Activated CD4-positive, alpha-beta memory T cell treated with anti-CD3 and anti-CD28 coated beads for 36 hours (primary cell): ENCODE measurements at regions of chr6 and their contacts with region 1.

Region 1: GRCh38 chr6:158853072-158853871 is 34.1 kb upstream of the EZR start:
- DNase-seq: peak; percentile 94
- H3K4me3 Mint-ChIP-seq: no peak overlapping the region
- H3K27ac Mint-ChIP-seq: no peak overlapping the region
- H3K4me1 Mint-ChIP-seq: peaks cover 28% of the 10 kb centered on the region
- H3K27me3 Mint-ChIP-seq: no peaks in the 10 kb centered on the region

Region 2: GRCh38 chr6:158819213-158819909 is 33.9 kb before region 1 on chr6 and contains the start of gene EZR:
- CTCF ChIA-PET with region 1: interaction called, 4 read pairs
- POLR2A ChIA-PET with region 1: interaction called, 5 read pairs
- intact Hi-C with region 1: loop called (anchors 1 kb)
- DNase-seq: peak; percentile 91
- H3K4me3 Mint-ChIP-seq: peak within 1 kb of the TSS; percentile 100
- H3K27ac Mint-ChIP-seq: peak within 1 kb of the TSS; percentile 99
- H3K4me1 Mint-ChIP-seq: peaks cover 43% of the 10 kb centered on the region
- H3K27me3 Mint-ChIP-seq: no peaks in the 10 kb centered on the region
- total RNA-seq, gene EZR: 255 to 256 TPM

Region 3: GRCh38 chr6:158869826-158870648 is 16.8 kb after region 1 on chr6:
- CTCF ChIA-PET with region 1: interaction called, 6 read pairs
- POLR2A ChIA-PET with region 1: interaction called, 64 read pairs
- intact Hi-C with region 1: loop called (anchors 1 kb)
- DNase-seq: peak; percentile 97
- H3K4me3 Mint-ChIP-seq: peak overlapping the region; percentile 82
- H3K27ac Mint-ChIP-seq: peak overlapping the region; percentile 98
- H3K4me1 Mint-ChIP-seq: peaks cover 34% of the 10 kb centered on the region
- H3K27me3 Mint-ChIP-seq: peaks cover 1% of the 10 kb centered on the region

Region 4: DNA sequence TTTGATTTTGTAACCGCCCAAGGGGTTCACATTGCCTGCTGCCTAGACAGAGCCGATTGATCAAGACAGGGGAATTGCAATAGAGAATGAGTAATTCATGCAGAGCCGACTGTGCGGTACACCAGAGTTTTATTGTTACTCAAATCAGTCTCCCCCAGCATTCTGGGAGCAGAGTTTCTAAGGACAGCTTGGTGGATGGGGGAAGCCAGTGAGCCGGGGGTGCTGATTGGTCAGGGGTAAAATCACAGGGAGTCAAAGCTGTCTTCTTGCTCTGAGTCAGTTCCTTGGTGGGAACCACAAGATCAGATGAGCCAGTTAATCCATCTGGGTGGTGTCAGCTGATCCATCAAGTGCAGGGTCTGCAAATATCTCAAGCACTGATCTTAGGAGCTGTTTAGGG is 25.9 kb after region 1 on chr6:
- CTCF ChIA-PET with region 1: no interaction called
- POLR2A ChIA-PET with region 1: no interaction called
- intact Hi-C with region 1: loop called (anchors 1 kb)
- DNase-seq: peak; percentile 91
- H3K4me3 Mint-ChIP-seq: no peak overlapping the region
- H3K27ac Mint-ChIP-seq: peak overlapping the region; percentile 35
- H3K4me1 Mint-ChIP-seq: peaks cover 22% of the 10 kb centered on the region
- H3K27me3 Mint-ChIP-seq: peaks cover 1% of the 10 kb centered on the region

Region 5: DNA sequence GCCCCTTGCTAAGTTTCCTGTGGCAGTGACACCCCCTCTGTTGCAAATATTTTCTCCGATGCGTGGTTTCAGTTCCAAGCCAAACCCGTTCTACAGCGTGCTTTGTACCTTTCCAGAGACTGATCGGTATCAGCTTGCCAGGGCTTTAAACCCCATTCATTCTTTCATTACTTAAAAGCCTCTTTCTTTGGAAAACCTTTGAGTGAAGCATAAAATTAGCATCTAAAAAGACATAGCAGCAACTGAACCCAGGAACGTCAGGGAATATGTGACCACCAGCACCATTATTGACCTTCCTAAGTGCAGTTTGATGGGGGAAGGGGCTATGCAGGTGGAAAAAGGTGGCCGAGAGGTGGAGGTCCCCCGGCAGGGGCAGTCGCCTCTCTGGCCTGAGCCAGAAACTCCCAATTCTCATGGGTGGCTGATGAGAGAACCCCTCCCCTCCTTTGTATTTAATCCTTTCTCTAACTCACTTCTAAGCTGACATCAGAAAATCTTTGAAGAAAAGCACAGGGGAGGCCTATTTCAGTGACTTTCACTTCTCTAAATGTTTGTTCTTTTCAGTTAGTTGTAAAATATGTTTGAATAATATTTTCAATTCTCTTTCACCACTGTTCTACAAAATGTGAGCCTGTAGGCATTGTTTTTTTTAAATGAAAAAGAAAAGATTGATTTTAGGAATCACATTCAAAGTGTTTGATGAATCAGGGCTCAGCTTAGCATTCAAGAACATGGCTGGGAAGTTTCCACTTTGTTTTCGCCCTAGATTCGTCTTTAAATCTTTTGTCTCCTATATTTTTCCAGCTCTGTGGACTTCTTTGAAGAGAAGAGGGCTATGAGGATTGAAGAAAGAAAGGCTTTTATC is 57.4 kb after region 1 on chr6:
- CTCF ChIA-PET with region 1: no interaction called
- POLR2A ChIA-PET with region 1: no interaction called
- intact Hi-C with region 1: loop called (anchors 2 kb)
- DNase-seq: no peak
- H3K4me3 Mint-ChIP-seq: peak overlapping the region; percentile 52
- H3K27ac Mint-ChIP-seq: peak overlapping the region; percentile 31
- H3K4me1 Mint-ChIP-seq: peaks cover 27% of the 10 kb centered on the region
- H3K27me3 Mint-ChIP-seq: no peaks in the 10 kb centered on the region

Region 6: DNA sequence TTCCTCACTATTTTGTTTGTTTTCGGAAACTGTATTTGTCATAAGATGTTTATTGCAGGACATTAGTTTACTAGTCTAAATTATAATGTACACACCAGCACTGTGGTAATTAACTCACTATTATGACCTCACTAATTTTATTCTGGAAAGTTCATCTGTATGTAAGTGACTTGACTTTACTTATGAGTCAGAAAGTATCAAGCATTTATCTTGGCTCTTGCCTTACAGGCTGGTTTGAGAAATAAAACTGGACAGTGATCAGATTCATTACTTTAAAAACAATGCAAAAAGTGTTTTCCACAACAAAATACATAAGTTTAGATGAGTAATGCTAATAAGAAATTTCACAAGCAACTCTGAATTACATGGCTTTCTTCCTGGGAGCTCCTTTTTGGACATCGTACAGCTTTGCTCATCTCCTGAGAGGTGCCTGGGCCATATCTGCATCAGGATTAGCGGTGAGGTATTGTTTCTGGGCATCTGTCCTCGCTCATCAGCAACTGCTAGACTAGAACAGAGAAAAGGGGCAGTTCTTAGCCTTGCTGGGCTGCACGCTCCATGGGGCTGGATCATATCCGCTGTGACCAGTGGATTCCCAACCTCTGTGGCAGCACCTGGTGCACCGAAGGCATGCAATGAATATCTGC is 659.9 kb after region 1 on chr6:
- CTCF ChIA-PET with region 1: no interaction called
- POLR2A ChIA-PET with region 1: no interaction called
- intact Hi-C with region 1: no loop called
- DNase-seq: no peak
- H3K4me3 Mint-ChIP-seq: no peak overlapping the region
- H3K27ac Mint-ChIP-seq: no peak overlapping the region
- H3K4me1 Mint-ChIP-seq: no peaks in the 10 kb centered on the region
- H3K27me3 Mint-ChIP-seq: peaks cover 7% of the 10 kb centered on the region